Dendritic cell treated with granulocyte-macrophage colony-stimulating factor and Interleukin-4, amounts not matched to agents 40 ng/mL and 50 ng/mL, for 4 days (primary cell): ENCODE measurements at regions of chr3 and their contacts with region 1.

Region 1: DNA sequence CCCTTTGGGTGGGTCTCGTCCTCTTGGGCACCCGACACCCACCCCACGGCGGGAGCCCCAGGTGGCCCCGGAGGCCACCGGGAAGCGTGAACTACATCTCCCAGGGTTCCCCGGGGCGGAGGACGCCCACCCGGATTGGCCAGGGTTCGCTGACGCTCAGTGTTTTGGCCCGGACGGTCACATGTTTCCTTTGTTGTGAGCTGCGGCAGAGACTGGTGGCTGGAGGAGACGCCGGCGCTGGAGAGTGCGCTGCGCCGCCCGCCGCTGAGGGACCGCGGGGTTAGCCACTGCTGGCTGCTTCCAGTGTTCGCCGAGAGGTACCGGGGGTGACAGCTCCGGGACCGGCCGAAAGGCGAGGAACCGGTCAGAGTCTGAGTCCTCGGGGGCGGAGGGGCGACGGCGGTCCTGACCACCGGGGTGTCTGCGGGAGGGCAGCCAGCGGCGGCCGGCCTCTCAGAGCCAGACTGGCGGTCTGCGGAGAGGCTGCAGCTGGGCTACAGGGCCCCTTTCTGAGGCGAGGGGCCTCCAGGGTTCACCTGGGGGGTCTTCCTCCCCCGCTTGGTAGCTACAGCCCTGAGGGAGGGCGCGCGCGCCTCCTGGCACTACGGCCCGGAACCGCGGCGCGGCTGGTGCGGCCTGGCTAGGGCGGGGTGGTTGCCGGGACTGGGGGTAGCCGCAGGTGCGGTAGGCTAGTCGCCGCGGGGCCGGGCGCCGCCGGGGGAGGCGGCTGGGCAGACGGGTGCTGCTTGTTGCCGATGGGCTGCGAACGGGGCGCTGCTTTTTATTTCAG is at the start of gene KLHL24:
- H3K4me3 Mint-ChIP-seq: peak within 1 kb of the TSS; percentile 93
- H3K27ac Mint-ChIP-seq: peak within 1 kb of the TSS; percentile 95
- H3K4me1 Mint-ChIP-seq: peaks cover 26% of the 10 kb centered on the region
- H3K27me3 Mint-ChIP-seq: no peaks in the 10 kb centered on the region

Region 2: DNA sequence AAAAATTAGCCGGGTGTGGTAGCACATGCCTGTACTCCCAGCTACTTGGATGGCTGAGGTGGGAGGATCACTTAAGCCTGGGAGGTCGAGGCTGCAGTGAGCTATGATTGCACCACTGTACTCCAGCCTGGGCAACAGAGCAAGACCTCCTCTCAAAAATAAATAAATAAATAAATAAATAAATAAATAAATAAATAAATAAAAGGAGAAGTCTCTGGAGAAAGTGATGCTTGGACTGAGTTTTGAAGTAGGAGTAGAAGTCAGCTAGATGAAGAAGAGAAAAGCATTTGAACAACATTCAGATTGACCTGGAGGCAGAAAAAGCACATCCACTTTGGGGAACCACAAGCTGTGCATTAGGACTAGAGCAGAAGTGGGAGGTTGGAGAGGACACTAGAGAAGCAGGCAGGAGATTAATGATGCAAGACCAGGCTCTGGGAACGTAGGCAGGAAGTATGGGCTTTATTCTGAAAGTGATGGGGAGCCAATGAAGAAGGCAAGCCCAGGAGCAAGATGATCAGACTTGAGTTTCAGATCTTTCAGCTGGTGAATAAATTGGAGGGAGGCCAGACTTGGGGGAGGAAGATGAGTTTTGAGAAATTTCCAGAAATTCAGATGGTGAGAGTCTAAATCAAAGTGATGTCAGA is 128.8 kb before region 1 on chr3:
- intact Hi-C with region 1: loop called (anchors 5 kb)
- H3K4me3 Mint-ChIP-seq: no peak overlapping the region
- H3K27ac Mint-ChIP-seq: peak overlapping the region; percentile 85
- H3K4me1 Mint-ChIP-seq: peaks cover 46% of the 10 kb centered on the region
- H3K27me3 Mint-ChIP-seq: no peaks in the 10 kb centered on the region

Region 3: DNA sequence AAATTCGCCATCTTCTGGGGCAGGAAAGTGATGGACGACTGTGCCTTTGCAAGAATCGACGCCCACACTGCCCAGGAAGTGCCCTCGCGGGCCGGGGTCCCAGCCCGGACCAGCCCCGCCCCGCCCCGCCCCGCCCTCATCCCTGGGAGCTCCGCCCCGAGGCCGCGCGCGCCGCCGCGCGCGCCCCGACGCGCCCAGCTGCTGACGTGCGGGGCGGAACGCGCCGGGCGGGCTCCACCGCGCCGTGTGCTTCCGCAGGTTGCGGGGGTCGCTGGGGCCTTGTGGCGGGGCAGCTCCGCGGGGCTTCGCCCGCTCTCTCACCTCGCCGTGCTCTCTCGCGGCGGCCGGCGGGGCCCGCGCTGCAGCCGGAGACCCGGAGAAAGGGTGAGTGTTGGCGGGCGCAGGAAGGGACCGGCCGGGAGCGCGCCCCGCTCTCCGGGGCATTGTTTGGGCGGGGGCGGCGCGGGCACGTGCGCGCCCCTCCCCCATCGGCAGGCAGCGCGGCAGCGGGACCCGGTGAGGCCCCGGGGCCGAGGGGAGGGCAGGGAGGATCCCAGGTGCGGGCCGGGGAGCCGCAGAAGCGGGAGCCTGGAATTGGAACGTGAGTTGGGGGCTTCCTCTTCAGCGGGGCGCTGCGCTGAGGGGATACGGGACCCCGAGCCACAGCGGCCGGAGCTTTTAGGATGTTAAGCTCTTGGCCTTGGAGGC is 62.1 kb after region 1 on chr3 and contains the start of gene YEATS2:
- intact Hi-C with region 1: loop called (anchors 2 kb)
- H3K4me3 Mint-ChIP-seq: peak within 1 kb of the TSS; percentile 79
- H3K27ac Mint-ChIP-seq: peak within 1 kb of the TSS; percentile 85
- H3K4me1 Mint-ChIP-seq: peaks cover 38% of the 10 kb centered on the region
- H3K27me3 Mint-ChIP-seq: peaks cover 4% of the 10 kb centered on the region